ENCODE measurements at regions of chr15 and their contacts with region 1.

Region 1: DNA sequence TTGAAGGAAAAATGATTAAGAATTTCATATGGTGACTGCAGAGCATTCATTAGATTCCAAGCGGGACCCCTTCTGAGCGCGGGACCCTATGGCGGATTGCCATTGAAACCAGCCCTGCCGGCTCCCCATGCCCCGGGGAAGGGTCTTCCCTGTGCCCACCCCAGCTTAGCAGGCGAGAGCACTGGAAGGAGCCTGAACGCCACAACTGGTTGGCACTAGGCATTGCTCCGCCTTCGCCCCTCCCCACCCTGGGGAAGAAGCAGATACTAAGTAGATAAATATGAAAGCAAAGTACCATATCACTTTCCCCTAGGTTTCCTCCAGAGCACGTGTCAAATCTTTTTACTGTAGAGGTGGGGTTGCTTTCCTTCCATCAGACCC is 70.7 kb downstream of the CYP19A1 start:
- DNase-seq: peak in 1 of 2 experiments; percentile 18
- H3K4me3 ChIP-seq: no peak overlapping the region
- H3K27ac ChIP-seq: no peak overlapping the region
- H3K4me1 ChIP-seq: no peaks in the 10 kb centered on the region
- H3K27me3 ChIP-seq: peaks cover 18% of the 10 kb centered on the region; the same call in 1 of the 2 replicates
- CTCF ChIP-seq: no peak

Region 2: DNA sequence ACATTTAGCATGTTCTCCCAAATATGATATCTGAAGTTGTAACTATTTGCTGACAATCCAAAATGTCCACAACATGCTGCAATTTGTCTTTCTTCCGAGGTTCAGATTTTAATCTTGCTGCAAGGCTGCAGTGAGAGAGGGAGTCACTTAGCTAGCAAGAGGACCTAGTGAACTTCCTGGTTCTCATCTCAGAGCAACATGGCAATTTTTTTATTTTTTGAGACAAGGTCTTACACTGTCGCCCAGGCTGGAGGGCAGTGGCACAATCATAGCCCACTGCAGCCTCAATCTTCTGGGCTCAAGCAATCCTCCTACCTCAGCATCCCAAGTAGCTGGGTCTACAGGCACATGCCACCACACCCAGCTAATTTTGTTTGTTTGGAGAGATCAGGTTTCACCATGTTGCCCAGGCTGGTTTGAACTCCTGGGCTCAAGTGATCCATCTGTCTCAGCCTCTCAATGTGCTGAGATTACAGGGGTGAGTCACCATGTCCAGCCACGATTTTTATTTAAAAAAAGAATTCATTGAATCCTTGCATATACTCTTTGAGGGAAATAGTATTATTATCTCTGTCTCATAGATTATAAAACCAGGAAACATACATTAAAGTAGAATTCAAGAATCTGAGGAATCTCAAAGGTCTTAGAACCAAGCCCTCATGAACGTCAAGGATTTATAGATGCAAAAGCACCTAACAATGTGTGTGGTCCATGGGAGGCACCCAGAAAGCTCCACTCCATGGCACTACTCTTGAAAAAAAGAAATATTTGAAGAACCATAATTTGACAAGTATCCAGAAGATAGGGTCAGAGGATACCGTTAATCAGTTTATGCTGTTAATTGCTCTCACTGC is 1011.3 kb before region 1 on chr15:
- CTCF ChIA-PET with region 1: interaction called, 12 read pairs
- POLR2A ChIA-PET with region 1: no interaction called
- intact Hi-C with region 1: no loop called
- DNase-seq: peak; percentile 54 to 84
- H3K4me3 ChIP-seq: no peak overlapping the region
- H3K27ac ChIP-seq: peak overlapping the region; percentile 17
- H3K4me1 ChIP-seq: peaks cover 32% of the 10 kb centered on the region
- H3K27me3 ChIP-seq: no peaks in the 10 kb centered on the region
- CTCF ChIP-seq: no peak

Region 3: DNA sequence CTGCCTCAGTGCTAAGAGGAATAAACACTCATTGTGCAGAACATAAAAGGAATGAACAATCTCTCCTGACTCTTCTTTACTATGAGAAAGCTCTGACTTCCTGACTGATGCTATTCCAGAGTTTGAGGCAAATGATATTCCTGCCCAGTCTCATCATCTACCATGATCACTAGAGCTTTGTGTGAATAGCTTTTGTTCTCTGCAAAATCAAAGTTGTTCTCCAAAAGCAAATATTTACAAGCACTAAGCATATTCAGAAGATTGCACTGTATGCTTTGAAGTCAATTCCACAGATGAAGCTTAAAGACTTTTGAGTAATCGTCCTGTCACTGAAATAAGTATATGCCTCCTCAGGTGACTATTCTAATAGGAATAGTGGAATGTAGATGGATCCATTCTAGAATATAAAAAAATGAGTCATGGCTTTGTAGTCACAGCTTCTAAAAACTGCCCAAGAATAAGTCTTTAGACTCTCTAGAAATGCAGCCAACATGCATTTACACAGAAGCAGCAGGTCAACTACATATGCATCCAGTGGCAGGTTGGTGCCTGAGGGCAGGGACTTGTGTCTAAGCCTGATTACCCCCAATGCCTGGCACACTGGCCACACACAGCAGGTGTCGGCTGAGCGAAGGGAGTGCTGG is 207.5 kb before region 1 on chr15:
- CTCF ChIA-PET with region 1: no interaction called
- POLR2A ChIA-PET with region 1: no interaction called
- intact Hi-C with region 1: no loop called
- DNase-seq: no peak
- H3K4me3 ChIP-seq: no peak overlapping the region
- H3K27ac ChIP-seq: no peak overlapping the region
- H3K4me1 ChIP-seq: no peaks in the 10 kb centered on the region
- H3K27me3 ChIP-seq: peaks cover 2% of the 10 kb centered on the region; the same call in 1 of the 2 replicates
- CTCF ChIP-seq: no peak

Region 4: DNA sequence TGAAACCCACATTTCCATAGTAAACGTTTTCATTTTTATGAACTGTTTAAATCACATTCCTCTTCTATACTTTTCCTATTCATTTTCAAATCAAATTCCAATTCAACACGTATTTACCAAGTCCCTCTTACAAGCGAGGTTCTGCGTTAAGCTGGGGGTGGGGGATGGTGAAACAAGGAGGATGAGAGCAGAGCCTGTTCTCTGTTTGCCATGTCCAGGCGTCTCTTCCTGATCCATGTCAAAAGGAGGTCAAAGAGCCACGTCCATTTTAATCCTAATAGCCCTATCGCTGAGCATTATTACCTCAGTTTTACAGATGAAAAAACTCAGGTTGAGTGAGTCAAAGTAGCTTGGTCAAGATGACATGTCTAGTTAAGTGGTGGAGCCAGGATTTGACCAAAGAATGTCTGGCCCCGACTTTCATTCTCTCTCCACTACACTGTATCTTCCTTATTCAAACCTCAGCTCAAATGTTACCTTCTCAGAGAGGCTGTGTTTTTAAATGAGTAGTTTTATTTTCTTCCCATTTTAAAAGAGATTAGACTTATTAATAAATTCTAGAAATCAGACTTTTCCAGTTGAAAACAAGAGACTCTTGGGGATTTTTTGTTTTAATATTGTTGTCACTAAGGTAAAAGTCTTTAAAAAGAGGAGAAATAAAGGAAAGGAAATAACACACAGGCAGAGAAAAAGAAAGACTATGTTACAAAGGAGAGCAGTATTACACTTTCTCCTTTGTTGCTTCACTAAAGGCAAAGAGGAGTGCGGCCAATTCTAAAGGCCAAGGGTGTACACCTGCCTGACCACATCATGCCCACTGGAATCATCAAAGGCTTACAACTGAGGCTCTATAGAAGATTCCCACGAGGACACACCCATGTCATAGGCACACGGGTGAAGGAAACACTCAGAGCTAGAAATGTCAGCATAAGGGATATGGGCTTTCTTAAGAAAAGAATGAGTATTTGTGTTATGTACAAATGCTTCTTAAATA is 1218.6 kb after region 1 on chr15:
- CTCF ChIA-PET with region 1: no interaction called
- POLR2A ChIA-PET with region 1: interaction called, 14 read pairs
- intact Hi-C with region 1: no loop called
- DNase-seq: no peak
- H3K4me3 ChIP-seq: no peak overlapping the region
- H3K27ac ChIP-seq: no peak overlapping the region
- H3K4me1 ChIP-seq: no peaks in the 10 kb centered on the region
- H3K27me3 ChIP-seq: no peaks in the 10 kb centered on the region
- CTCF ChIP-seq: no peak

Measured in PC-9 (cell line).